Testis (tissue), 5 donors: ENCODE measurements at regions of chr11 and their contacts with region 1.

Region 1: GRCh38 chr11:59560702-59561469 is 49.5 kb downstream of the OR4D9 start:
- DNase-seq: peak; percentile 93
- H3K4me3 ChIP-seq: peak overlapping the region; percentile 81 to 89
- H3K27ac ChIP-seq: peak overlapping the region; percentile 85 to 91
- H3K4me1 ChIP-seq: peaks cover 5% of the 10 kb centered on the region
- H3K27me3 ChIP-seq: no peaks in the 10 kb centered on the region
- CTCF ChIP-seq: no peak
- POLR2A ChIP-seq: no peak

Region 2: GRCh38 chr11:59479906-59480305 is 81.0 kb before region 1 on chr11:
- intact Hi-C with region 1: no loop called
- DNase-seq: no peak
- H3K4me3 ChIP-seq: no peak overlapping the region
- H3K27ac ChIP-seq: no peak overlapping the region
- H3K4me1 ChIP-seq: no peaks in the 10 kb centered on the region
- H3K27me3 ChIP-seq: no peaks in the 10 kb centered on the region
- CTCF ChIP-seq: no peak
- POLR2A ChIP-seq: no peak

Region 3: GRCh38 chr11:59668950-59669610 is 108.2 kb after region 1 on chr11 and contains the start of gene PATL1:
- intact Hi-C with region 1: loop called (anchors 10 kb)
- DNase-seq: peak; percentile 100
- H3K4me3 ChIP-seq: peak within 1 kb of the TSS; percentile 94 to 95
- H3K27ac ChIP-seq: peak within 1 kb of the TSS; percentile 95 to 98
- H3K4me1 ChIP-seq: peaks cover 9% of the 10 kb centered on the region
- H3K27me3 ChIP-seq: no peaks in the 10 kb centered on the region
- CTCF ChIP-seq: no peak
- POLR2A ChIP-seq: peak; percentile 96
- total RNA-seq, gene PATL1: 22.5 to 24.0 TPM